Tibial artery (tissue), 4 donors: ENCODE measurements at regions of chr19 and their contacts with region 1.

Region 1: GRCh38 chr19:54506079-54506478 is 3.4 kb downstream of the LAIR2 start:
- DNase-seq: no peak
- H3K4me3 ChIP-seq: no peak overlapping the region
- H3K27ac ChIP-seq: no peak overlapping the region
- H3K4me1 ChIP-seq: no peaks in the 10 kb centered on the region
- H3K27me3 ChIP-seq: peaks cover 0 to 8% of the 10 kb centered on the region in 2 donors
- CTCF ChIP-seq: no peak

Region 2: DNA sequence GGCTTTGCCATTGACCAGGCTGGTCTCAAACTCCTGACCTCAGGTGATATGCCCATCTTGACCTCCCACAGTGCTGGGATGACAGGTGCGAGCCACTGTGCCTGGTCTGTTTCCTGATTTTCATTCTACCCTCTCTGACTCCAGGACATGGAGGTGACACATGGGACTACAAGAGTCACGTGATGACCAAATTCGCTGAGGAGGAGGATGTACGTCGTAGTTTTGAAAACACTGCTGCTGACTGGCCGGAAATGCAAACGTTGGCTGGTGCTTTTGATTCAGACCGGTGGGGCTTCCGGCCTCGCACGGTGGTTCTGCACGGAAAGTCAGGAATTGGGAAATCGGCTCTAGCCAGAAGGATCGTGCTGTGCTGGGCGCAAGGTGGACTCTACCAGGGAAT is 1520.7 kb after region 1 on chr19:
- intact Hi-C with region 1: loop called (anchors 5 kb)
- DNase-seq: no peak
- H3K4me3 ChIP-seq: no peak overlapping the region
- H3K27ac ChIP-seq: no peak overlapping the region
- H3K4me1 ChIP-seq: no peaks in the 10 kb centered on the region
- H3K27me3 ChIP-seq: no peaks in the 10 kb centered on the region
- CTCF ChIP-seq: no peak